ENCODE measurements at regions of chr9 and their contacts with region 1.

Region 1: GRCh38 chr9:26326473-26327044 is 566.0 kb downstream of the CAAP1 start:
- DNase-seq: no peak

Region 2: GRCh38 chr9:26612211-26612610 is 285.7 kb after region 1 on chr9:
- intact Hi-C with region 1: loop called in 1 of 2 experiments (anchors 5 kb)
- DNase-seq: no peak